Natural killer cell (primary cell): ENCODE measurements at regions of chr3 and their contacts with region 1.

Region 1: GRCh38 chr3:176872771-176873209 is 324.5 kb downstream of the TBL1XR1 start:
- DNase-seq: peak in 1 of 2 donors; percentile 75
- ATAC-seq: peak; percentile 82 to 88 (median 87)
- H3K4me3 ChIP-seq: no peak overlapping the region
- H3K4me3 Mint-ChIP-seq: no peak overlapping the region
- H3K27ac ChIP-seq: no peak overlapping the region
- H3K27ac Mint-ChIP-seq: peak overlapping the region in 1 of 2 donors; percentile 53
- H3K4me1 ChIP-seq: peaks cover 5% of the 10 kb centered on the region
- H3K4me1 Mint-ChIP-seq: peaks cover 0 to 6% of the 10 kb centered on the region in 2 donors
- H3K27me3 ChIP-seq: no peaks in the 10 kb centered on the region
- H3K27me3 Mint-ChIP-seq: no peaks in the 10 kb centered on the region
- CTCF ChIP-seq: peak; percentile 71

Region 2: DNA sequence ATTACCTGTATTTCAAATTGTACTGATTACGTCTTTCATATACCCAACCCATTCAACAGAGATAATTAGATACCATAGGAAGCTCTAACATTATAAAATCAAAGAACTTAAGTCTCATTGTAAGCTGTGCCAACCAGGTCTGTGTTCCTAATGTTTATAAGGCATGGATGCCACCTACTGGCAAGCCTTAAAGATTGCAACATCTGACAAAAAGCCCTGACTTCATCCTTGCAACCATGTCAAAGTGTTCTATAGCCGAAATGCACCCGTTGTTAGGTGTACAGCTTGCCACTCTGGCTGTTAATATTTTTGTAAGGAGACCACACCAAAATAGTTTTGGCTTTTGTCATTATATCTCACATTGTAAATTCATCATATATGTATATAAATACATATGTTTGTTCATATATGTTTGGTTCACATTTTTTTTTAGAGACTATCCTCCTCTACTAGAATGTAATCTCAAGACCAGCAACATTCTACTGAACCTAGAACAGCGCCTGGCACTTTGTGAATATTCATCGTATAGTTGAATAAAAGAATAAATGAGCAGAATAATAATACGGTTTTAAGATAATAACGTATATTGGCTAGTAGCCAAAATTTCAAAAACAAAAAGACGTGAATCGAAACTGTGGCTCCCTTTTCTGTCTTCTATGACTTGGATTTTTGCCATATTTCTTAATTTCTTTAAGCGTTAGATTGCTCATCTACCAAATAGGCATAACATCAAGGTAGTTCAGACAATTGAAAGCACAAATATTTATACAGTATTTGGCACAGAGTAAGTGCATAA is 66.4 kb after region 1 on chr3:
- intact Hi-C with region 1: loop called (anchors 1 kb)
- DNase-seq: peak in 1 of 2 donors; percentile 67
- ATAC-seq: peak; percentile 64 to 80 (median 70)
- H3K4me3 ChIP-seq: no peak overlapping the region
- H3K4me3 Mint-ChIP-seq: no peak overlapping the region
- H3K27ac ChIP-seq: no peak overlapping the region
- H3K27ac Mint-ChIP-seq: no peak overlapping the region
- H3K4me1 ChIP-seq: no peaks in the 10 kb centered on the region
- H3K4me1 Mint-ChIP-seq: no peaks in the 10 kb centered on the region
- H3K27me3 ChIP-seq: no peaks in the 10 kb centered on the region
- H3K27me3 Mint-ChIP-seq: peaks cover 0 to 5% of the 10 kb centered on the region in 2 donors
- CTCF ChIP-seq: peak; percentile 73

Region 3: GRCh38 chr3:177041021-177041729 is 168.4 kb after region 1 on chr3:
- intact Hi-C with region 1: no loop called
- DNase-seq: no peak
- ATAC-seq: no peak
- H3K4me3 ChIP-seq: no peak overlapping the region
- H3K4me3 Mint-ChIP-seq: no peak overlapping the region
- H3K27ac ChIP-seq: no peak overlapping the region
- H3K27ac Mint-ChIP-seq: peak overlapping the region in 1 of 2 donors; percentile 33
- H3K4me1 ChIP-seq: no peaks in the 10 kb centered on the region
- H3K4me1 Mint-ChIP-seq: peaks cover 15 to 22% of the 10 kb centered on the region in 2 donors
- H3K27me3 ChIP-seq: no peaks in the 10 kb centered on the region
- H3K27me3 Mint-ChIP-seq: no peaks in the 10 kb centered on the region
- CTCF ChIP-seq: no peak

Region 4: GRCh38 chr3:178325330-178325729 is 1452.5 kb after region 1 on chr3:
- intact Hi-C with region 1: loop called (anchors 5 kb)
- DNase-seq: peak in 1 of 2 donors; percentile 9
- ATAC-seq: no peak
- H3K4me3 ChIP-seq: no peak overlapping the region
- H3K4me3 Mint-ChIP-seq: no peak overlapping the region
- H3K27ac ChIP-seq: no peak overlapping the region
- H3K27ac Mint-ChIP-seq: no peak overlapping the region
- H3K4me1 ChIP-seq: no peaks in the 10 kb centered on the region
- H3K4me1 Mint-ChIP-seq: no peaks in the 10 kb centered on the region
- H3K27me3 ChIP-seq: no peaks in the 10 kb centered on the region
- H3K27me3 Mint-ChIP-seq: peaks cover 0 to 3% of the 10 kb centered on the region in 2 donors
- CTCF ChIP-seq: no peak

Region 5: DNA sequence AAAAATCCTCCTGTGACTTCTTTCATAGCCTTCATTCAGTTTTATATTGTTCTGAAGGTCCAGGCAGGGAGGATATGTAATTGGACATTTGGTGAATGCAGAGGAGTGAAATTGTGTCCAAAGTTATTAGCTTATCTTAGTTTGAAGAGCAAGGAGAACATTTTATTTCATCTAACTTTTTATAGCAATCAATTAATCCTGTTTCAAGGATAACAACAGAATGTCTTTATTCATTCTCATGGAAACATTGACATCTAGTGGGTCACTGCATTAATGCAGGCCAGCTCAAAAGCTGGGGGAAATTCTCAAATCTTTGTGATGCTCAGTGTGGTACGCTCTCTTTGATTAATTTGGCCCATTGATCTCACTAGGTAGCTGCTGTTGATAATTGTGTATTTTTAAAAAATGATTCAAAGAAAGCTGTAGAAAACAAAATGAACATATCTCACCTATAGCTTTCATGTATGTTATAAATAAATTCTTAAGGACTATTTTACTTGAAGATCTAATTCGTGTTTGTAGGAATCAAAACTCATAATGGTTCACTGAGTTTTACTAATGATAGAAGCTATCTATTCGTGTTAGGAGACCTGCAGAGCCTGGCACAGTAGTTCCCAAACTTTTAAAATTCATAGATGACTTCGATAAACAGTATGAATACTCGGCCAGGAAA is 1512.6 kb after region 1 on chr3:
- intact Hi-C with region 1: loop called (anchors 1 kb)
- DNase-seq: peak in 1 of 2 donors; percentile 61
- ATAC-seq: peak in 2 of 3 donors; percentile 54 to 66
- H3K4me3 ChIP-seq: no peak overlapping the region
- H3K4me3 Mint-ChIP-seq: no peak overlapping the region
- H3K27ac ChIP-seq: no peak overlapping the region
- H3K27ac Mint-ChIP-seq: no peak overlapping the region
- H3K4me1 ChIP-seq: no peaks in the 10 kb centered on the region
- H3K4me1 Mint-ChIP-seq: no peaks in the 10 kb centered on the region
- H3K27me3 ChIP-seq: no peaks in the 10 kb centered on the region
- H3K27me3 Mint-ChIP-seq: peaks cover 0 to 8% of the 10 kb centered on the region in 2 donors
- CTCF ChIP-seq: peak; percentile 76